Dendritic cell treated with granulocyte-macrophage colony-stimulating factor and Interleukin-4, amounts not matched to agents 40 ng/mL and 50 ng/mL, for 4 days (primary cell): ENCODE measurements at regions of chr3 and their contacts with region 1.

Region 1: DNA sequence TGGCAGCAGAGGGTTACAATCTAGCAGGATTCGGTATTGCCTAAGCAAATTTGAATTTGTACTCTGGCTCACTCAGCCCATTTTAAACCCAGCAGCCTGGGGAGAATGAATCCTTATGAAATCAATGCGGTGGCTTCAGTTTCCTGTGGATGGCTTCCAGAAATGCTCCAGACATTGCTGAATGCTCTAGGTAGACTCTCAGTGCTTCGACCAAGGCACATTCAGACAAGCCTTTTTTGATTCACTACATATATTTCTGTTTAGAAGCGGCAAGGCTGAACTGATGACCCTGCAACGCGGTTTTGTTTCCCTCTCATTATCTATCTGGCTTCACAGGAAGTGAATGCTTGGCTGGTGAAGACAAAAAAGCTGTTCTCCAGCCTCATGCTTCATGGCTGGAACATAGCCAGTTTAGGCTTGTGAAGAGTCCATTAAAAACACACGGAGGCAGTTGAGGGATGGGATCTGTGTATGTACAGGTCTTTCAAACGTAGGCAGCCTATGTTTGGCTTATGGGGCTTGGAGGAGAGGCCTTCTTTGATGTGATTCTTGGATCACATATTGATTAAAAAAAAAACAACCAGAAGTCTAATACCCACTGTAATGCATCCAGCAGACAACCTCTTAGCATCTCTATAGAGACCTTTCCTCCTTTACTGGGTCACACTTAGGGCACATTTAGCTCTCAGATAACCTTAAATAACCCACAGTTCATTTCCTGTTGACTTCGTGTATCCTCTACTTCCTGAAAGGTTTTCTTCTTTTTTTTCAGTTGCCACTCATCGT is 400.2 kb upstream of the TBL1XR1 start:
- H3K4me3 Mint-ChIP-seq: no peak overlapping the region
- H3K27ac Mint-ChIP-seq: peak overlapping the region; percentile 72
- H3K4me1 Mint-ChIP-seq: peaks cover 77% of the 10 kb centered on the region
- H3K27me3 Mint-ChIP-seq: no peaks in the 10 kb centered on the region

Region 2: GRCh38 chr3:177320765-177321247 is 276.7 kb before region 1 on chr3:
- intact Hi-C with region 1: no loop called
- H3K4me3 Mint-ChIP-seq: no peak overlapping the region
- H3K27ac Mint-ChIP-seq: peak overlapping the region; percentile 55
- H3K4me1 Mint-ChIP-seq: peaks cover 43% of the 10 kb centered on the region
- H3K27me3 Mint-ChIP-seq: no peaks in the 10 kb centered on the region

Region 3: GRCh38 chr3:177448987-177449975 is 148.2 kb before region 1 on chr3:
- intact Hi-C with region 1: loop called (anchors 10 kb)
- H3K4me3 Mint-ChIP-seq: no peak overlapping the region
- H3K27ac Mint-ChIP-seq: peak overlapping the region; percentile 26
- H3K4me1 Mint-ChIP-seq: peaks cover 30% of the 10 kb centered on the region
- H3K27me3 Mint-ChIP-seq: no peaks in the 10 kb centered on the region

Region 4: DNA sequence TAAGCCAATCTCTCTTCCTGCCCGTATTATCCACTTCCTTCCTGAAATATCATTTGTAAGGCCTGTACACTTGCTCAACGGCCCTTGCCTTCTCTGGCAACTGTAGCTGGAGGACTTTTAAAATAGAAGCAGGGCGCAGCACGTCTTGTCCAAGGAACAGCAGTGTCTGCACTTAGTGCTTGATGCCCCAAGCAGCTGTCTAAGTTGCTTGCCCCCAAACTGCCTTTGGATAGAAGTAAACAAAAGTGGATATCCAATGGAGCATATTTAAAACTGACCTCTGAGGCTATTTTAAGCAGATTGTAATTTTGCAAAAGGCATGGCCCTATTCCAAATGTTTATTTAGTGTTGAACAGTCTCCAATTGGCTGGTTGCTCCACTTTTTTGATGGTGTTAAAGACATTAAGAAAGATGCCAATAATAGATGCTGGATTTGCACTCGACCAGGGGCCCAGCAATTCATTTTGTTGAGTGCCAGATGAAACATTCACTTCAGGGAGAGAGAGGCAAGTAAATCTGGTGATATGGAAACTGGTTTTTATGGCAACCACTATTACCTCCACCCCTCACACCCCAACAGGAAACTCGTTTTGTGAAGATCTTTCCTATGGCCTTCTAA is 126.6 kb after region 1 on chr3:
- intact Hi-C with region 1: loop called (anchors 10 kb)
- H3K4me3 Mint-ChIP-seq: no peak overlapping the region
- H3K27ac Mint-ChIP-seq: peak overlapping the region; percentile 64
- H3K4me1 Mint-ChIP-seq: peaks cover 71% of the 10 kb centered on the region
- H3K27me3 Mint-ChIP-seq: no peaks in the 10 kb centered on the region

Region 5: GRCh38 chr3:179083977-179084376 is 1486.5 kb after region 1 on chr3:
- intact Hi-C with region 1: no loop called
- H3K4me3 Mint-ChIP-seq: no peak overlapping the region
- H3K27ac Mint-ChIP-seq: no peak overlapping the region
- H3K4me1 Mint-ChIP-seq: no peaks in the 10 kb centered on the region
- H3K27me3 Mint-ChIP-seq: no peaks in the 10 kb centered on the region